OCI-LY7 (cell line): ENCODE measurements at regions of chr6 and their contacts with region 1.

Region 1: DNA sequence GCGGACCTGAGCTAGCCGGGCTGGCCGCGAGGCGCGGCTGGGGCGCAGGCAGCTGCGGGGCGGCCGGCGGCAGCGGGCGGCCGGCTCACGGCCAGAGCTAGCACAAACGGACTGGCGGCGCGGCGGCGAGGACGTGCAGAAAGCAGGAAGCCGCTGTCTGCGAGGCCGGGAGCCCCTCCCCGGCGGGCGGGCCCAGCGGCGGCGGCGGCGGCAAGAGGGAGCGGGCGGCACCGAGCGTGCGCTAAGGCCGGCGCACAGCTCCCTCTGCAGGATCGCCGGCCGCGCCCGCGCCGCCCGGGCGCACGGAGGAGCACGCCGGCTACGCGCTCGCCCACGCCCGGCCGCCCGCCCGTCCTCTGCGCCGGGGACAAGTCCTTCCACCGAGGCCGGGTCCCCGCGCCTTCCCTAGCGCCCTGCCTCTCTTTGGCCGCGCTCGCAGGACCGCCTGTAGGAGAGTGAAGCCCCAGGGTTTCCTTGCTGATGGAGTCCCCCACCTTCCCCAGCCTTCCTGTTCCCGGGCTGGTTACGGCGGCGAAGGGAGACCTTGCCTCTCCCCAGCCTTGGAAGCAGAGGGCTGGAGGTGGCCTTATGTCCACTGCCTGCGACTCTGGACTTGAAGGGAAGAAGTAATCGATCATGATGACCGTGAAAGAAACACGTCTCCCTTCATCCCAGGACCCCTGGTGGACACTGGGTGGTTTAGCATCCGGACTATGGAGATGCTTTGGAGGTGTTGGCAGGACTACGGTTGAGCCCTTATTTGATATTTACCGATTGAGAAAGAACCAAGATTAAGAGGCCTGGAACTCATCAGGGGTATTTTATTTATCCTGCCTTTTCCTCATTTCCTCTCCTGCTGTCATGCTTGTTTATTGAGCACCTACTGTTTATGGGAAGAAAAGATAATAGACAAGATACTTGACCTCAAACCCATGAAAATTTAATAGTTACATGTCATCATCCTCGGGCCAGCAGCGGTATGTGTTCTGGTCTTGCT is at the start of gene PREP:
- DNase-seq: peak; percentile 88
- H3K4me3 ChIP-seq: peak within 1 kb of the TSS; percentile 100
- H3K27ac ChIP-seq: peak within 1 kb of the TSS; percentile 22
- H3K4me1 ChIP-seq: peaks cover 3% of the 10 kb centered on the region
- CTCF ChIP-seq: peak; percentile 87
- total RNA-seq, gene PREP: 10.4 and 12.0 TPM in 2 replicates

Region 2: GRCh38 chr6:104859225-104860146 is 543.8 kb before region 1 on chr6 and contains the start of gene HACE1:
- CTCF ChIA-PET with region 1: no interaction called
- POLR2A ChIA-PET with region 1: no interaction called
- intact Hi-C with region 1: loop called (anchors 10 kb)
- DNase-seq: peak; percentile 88
- H3K4me3 ChIP-seq: peak within 1 kb of the TSS; percentile 85
- H3K27ac ChIP-seq: peak within 1 kb of the TSS; percentile 10
- H3K4me1 ChIP-seq: peaks cover 8% of the 10 kb centered on the region
- CTCF ChIP-seq: no peak; the same call in 1 of the 2 replicates
- total RNA-seq, gene HACE1: 16.6 and 22.2 TPM in 2 replicates

Region 3: GRCh38 chr6:105087571-105088211 is 315.5 kb before region 1 on chr6:
- CTCF ChIA-PET with region 1: no interaction called
- POLR2A ChIA-PET with region 1: interaction called, 3 read pairs
- intact Hi-C with region 1: loop called (anchors 5 kb)
- DNase-seq: peak; percentile 63
- H3K4me3 ChIP-seq: no peak overlapping the region
- H3K27ac ChIP-seq: no peak overlapping the region
- H3K4me1 ChIP-seq: no peaks in the 10 kb centered on the region
- CTCF ChIP-seq: peak; percentile 98

Region 4: DNA sequence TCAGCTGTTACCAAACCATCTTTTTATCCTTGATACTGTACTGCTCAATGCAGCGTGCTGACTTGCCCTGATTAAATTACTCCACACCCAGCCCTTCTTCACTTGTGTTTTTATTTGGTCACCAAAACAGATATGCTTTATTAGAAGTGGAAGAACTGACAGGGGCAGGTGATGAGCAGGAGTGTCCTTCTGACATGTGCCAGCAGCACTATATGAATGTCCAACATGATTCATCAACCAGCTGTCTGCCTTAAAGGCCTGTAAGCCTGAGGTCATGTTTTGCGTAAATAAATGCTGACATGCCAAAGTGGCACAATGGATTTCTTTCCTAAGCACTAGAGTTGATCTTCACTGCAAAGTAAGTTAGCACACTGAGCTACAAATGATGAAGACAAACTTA is 238.8 kb before region 1 on chr6:
- CTCF ChIA-PET with region 1: no interaction called
- POLR2A ChIA-PET with region 1: no interaction called
- intact Hi-C with region 1: no loop called
- DNase-seq: no peak
- H3K4me3 ChIP-seq: no peak overlapping the region
- H3K27ac ChIP-seq: no peak overlapping the region
- H3K4me1 ChIP-seq: no peaks in the 10 kb centered on the region
- CTCF ChIP-seq: no peak

Region 5: DNA sequence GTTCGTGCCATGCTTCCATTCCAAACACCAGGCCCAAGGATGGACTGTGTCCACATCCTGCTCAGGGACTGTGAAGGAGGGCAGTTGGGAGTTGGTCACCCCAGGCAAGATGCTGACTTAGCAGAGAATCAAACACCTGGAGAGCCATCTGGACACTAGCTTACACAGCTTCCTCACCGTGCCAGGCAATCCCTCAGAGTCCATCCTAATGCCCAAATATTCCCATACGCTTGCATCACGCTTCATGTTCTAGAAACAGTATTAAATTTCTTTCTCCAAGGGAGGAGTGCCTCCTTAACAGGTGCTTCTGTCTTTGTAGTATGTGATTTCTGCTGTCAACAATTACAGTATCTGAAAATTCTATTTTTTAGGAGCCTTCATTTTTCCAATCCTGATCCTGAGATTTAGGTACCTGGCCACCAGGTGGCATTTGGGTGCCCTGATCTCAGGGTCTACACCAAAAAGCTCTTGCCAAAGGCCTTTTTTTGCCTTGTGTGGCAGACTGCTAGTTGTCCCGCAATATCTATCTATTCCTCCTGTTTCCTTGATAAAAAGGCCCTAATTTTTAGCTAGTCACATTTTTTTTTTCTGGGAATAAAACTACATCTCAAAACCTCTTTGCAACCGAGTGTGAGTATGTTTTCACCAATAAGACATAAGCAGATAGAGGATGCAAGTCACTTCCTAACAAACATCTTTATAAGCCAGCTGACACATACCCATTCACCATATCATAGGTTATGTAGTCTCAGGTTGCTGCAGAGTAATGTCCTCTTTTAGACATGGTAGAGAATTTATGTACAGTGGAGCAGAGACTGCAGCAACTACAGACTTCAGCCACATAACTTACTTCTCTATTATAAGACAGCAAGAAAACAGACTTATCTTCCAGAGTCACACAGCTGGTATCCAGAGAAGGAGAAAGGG is 85.4 kb before region 1 on chr6:
- CTCF ChIA-PET with region 1: no interaction called
- POLR2A ChIA-PET with region 1: no interaction called
- intact Hi-C with region 1: loop called (anchors 5 kb)
- DNase-seq: peak; percentile 22
- H3K4me3 ChIP-seq: no peak overlapping the region
- H3K27ac ChIP-seq: no peak overlapping the region
- H3K4me1 ChIP-seq: no peaks in the 10 kb centered on the region
- CTCF ChIP-seq: peak; percentile 69